ENCODE measurements at regions of chr6 and their contacts with region 1.

Region 1: DNA sequence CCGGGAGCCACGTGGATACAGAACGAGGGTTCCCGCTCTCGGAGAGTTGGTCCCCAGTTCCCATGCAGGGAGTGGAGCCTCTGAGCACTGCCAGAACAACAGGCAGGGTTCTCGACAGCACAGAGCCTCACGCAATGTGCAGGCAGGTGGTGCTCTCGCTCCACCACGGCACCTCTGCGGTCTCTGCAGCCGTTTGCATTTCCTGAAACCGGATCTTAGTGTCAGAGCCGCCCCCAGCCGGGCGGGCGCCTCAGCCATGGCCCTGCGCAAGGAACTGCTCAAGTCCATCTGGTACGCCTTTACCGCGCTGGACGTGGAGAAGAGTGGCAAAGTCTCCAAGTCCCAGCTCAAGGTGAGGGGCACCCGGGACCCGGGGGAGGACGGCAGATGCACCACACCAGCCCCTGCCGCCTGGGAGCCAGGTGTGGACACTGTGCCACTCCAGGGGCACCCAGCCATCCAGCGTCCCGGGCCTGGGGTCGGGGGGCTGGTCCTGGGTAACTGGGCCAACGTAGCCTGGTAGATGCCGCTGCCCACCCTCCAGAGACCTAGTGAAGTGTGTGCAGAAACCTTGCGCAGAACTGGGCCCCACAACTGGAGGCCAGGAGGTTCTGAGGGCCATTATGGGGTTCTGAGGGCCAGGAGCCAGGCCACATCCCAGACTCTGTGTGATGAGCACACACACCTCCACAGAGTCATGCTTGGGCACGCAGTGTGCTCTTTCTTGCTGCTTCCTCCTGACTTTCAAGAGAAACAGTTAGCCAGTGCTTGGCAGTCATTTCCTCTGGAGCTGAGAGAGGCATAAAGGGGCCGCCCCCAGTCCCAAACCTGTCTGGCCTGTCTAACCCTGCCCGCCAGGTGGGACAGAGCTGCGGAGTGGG is at the start of gene DEF6:
- DNase-seq: no peak
- H3K4me3 ChIP-seq: peak within 1 kb of the TSS; percentile 47
- H3K27me3 ChIP-seq: no peaks in the 10 kb centered on the region
- CTCF ChIP-seq: peak; percentile 73
- polyA plus RNA-seq, gene DEF6: 3.7 and 4.1 TPM in 2 replicates

Region 2: DNA sequence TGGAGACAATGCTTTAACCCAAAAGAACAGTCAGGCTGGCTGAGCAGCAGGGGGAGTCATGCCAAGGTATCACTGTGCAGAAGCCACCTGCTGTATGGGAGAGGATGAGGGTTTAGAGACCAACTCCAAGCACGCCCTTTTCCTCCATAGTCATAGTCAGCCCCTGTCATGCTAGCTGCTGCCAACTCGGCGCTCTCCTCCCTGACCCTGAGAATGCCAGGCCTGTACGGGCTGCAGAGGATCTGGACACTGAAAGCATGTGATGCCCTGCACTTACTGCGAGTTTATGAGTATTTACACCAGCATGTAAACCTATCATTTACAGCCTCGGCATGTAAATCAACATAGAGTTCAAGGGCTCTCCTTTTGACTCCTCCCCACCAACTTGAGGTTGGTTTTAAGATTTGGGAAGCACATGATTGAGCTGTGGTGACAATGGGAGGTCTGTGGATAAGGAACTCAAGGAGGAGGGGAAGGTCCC is 95.7 kb before region 1 on chr6:
- CTCF ChIA-PET with region 1: no interaction called
- POLR2A ChIA-PET with region 1: no interaction called
- DNase-seq: no peak
- H3K4me3 ChIP-seq: no peak overlapping the region
- H3K27me3 ChIP-seq: no peaks in the 10 kb centered on the region
- CTCF ChIP-seq: no peak

Region 3: DNA sequence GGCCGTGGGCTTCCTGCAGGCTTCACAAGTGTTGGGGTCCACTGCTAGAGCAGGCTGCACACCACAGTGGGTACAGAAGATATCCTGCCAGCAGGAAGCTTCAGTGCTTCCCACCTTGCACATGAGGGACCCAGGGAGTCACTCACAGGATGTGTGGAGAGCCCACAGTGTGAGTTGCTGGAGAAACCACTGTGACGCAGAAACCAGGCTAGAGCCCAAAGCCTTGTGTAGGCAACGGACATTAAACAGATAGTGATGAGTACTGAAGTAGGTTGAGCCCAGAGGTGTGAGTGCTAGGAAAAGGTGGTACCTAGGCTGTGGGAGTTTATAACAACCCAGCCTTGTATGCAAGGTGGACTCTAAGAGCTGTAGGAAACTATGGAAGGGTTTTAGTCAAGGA is 19.1 kb before region 1 on chr6:
- CTCF ChIA-PET with region 1: interaction called, 10 read pairs
- POLR2A ChIA-PET with region 1: no interaction called
- DNase-seq: no peak
- H3K4me3 ChIP-seq: no peak overlapping the region
- H3K27me3 ChIP-seq: no peaks in the 10 kb centered on the region
- CTCF ChIP-seq: no peak

Region 4: GRCh38 chr6:35287671-35288396 is 10.0 kb before region 1 on chr6:
- CTCF ChIA-PET with region 1: interaction called, 33 read pairs
- POLR2A ChIA-PET with region 1: no interaction called
- DNase-seq: no peak
- H3K4me3 ChIP-seq: no peak overlapping the region
- H3K27me3 ChIP-seq: no peaks in the 10 kb centered on the region
- CTCF ChIP-seq: no peak

Region 5: GRCh38 chr6:35327349-35328027 is 29.6 kb after region 1 on chr6:
- CTCF ChIA-PET with region 1: interaction called, 57 read pairs
- POLR2A ChIA-PET with region 1: no interaction called
- DNase-seq: no peak
- H3K4me3 ChIP-seq: no peak overlapping the region
- H3K27me3 ChIP-seq: peaks cover 3% of the 10 kb centered on the region; the same call in 1 of the 2 replicates
- CTCF ChIP-seq: peak; percentile 85

Region 6: DNA sequence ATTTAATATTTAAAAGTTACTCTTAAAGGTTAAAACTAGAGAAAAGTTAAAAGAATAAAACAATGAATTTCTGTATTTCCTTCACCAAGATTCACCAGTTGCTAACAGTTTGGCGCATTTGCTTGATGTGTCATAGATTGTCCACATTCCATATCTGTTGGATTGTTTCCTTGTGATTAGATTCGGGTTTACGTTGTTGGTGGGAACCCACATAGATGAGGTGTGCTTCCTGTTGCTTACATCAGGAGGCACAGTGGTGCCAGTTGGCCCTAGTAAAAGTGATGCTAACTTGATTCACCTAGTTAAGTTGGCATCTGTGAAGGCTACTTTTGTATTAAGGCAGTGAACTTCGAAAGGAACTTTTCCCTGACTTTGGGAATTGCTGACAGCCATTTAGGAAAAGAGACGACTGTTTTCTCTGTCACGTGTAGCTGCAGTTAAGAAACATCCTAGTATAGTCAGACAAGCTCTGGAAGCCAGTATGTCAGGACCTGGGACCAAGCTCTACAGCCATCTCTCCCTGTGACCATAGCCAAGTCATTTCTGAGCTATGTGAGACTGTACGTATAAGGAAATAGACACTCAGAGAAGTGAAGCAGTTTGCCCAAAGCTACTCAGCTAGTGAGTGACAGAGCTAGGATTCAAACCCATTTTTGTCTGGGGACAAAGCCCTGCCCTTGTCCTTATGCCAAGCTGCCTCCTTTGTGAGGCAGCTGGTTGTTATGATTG is 93.6 kb after region 1 on chr6:
- CTCF ChIA-PET with region 1: no interaction called
- POLR2A ChIA-PET with region 1: no interaction called
- DNase-seq: peak; percentile 47
- H3K4me3 ChIP-seq: no peak overlapping the region
- H3K27me3 ChIP-seq: no peaks in the 10 kb centered on the region
- CTCF ChIP-seq: no peak

Region 7: DNA sequence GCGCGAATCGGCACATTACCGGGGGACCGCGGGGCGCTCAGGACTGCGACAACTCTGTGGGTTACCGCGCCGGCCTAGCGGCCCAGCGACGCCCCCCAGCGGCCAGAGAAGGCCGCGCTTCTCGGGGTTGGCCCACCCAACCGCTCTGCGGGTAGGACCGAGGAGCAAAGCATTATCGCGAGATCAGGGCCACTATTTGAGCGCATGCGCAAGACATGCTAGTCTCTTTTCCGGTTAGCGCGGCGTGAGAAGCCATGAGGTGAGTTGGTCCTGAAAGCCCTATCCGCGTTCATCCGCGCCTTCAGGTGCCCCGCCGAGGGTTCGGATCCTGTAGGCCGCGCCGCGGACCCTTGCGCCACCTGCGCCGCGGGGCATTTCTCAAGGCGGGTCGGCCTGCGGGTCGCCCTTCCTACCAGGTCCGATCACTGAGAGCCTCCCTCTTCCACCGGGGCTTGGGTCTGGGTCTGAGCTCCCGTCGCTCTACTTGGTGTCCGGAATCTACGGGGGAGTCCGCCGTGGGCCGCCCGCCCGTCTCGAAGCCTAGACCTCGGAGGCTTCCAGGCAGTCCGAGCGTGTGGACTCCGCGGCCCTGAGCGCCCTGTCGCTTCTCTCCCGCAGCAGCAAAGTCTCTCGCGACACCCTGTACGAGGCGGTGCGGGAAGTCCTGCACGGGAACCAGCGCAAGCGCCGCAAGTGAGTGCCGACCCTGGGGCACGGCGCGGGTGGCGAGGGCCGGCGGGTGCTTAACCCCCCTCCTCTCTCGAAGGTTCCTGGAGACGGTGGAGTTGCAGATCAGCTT is 170.5 kb after region 1 on chr6 and contains the start of gene RPL10A:
- CTCF ChIA-PET with region 1: interaction called, 20 read pairs
- POLR2A ChIA-PET with region 1: no interaction called
- DNase-seq: peak; percentile 79
- H3K4me3 ChIP-seq: peak within 1 kb of the TSS; percentile 80
- H3K27me3 ChIP-seq: no peaks in the 10 kb centered on the region
- CTCF ChIP-seq: peak; percentile 100
- polyA plus RNA-seq, gene RPL10A: 2,524 and 2,691 TPM in 2 replicates